Heart right ventricle (tissue), 16 donors: ENCODE measurements at regions of chr7 and their contacts with region 1.

Region 1: GRCh38 chr7:90271753-90272152 is 26.8 kb downstream of the CFAP69 start:
- DNase-seq: no peak
- ATAC-seq: no peak
- H3K4me3 ChIP-seq: no peak overlapping the region
- H3K27ac ChIP-seq: peak overlapping the region in 1 of 10 donors; percentile 22
- H3K4me1 ChIP-seq: peaks cover 0 to 11% (median 0%) of the 10 kb centered on the region in 9 donors
- H3K27me3 ChIP-seq: no peaks in the 10 kb centered on the region
- CTCF ChIP-seq: no peak

Region 2: DNA sequence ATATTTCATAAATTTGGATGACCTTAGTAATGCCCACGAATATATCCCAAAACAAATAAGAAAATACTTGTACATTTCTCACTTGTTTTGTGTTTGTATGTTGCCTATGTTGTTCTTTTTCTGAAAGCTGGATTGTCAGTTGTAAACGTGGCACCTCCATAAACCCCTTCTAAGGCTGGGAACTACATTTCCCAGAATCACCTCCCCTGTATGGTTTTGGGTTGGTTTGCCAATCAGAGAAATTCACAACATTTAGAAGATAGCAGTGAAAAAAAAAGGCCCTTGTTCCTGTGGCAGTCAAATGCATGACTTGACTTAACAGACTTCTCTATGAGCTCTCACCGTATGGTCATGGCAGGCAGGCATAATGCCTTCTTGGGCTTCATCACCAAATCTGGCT is 793.8 kb before region 1 on chr7:
- intact Hi-C with region 1: no loop called
- DNase-seq: no peak
- ATAC-seq: no peak
- H3K4me3 ChIP-seq: no peak overlapping the region
- H3K27ac ChIP-seq: no peak overlapping the region
- H3K4me1 ChIP-seq: no peaks in the 10 kb centered on the region
- H3K27me3 ChIP-seq: no peaks in the 10 kb centered on the region
- CTCF ChIP-seq: no peak

Region 3: GRCh38 chr7:90424720-90425119 is 153.0 kb after region 1 on chr7:
- intact Hi-C with region 1: loop called in 1 of 10 experiments (anchors 10 kb)
- DNase-seq: no peak
- ATAC-seq: no peak
- H3K4me3 ChIP-seq: no peak overlapping the region
- H3K27ac ChIP-seq: no peak overlapping the region
- H3K4me1 ChIP-seq: peaks cover 0 to 14% (median 0%) of the 10 kb centered on the region in 9 donors
- H3K27me3 ChIP-seq: no peaks in the 10 kb centered on the region
- CTCF ChIP-seq: no peak